ENCODE measurements at regions of chr11 and their contacts with region 1.

Region 1: DNA sequence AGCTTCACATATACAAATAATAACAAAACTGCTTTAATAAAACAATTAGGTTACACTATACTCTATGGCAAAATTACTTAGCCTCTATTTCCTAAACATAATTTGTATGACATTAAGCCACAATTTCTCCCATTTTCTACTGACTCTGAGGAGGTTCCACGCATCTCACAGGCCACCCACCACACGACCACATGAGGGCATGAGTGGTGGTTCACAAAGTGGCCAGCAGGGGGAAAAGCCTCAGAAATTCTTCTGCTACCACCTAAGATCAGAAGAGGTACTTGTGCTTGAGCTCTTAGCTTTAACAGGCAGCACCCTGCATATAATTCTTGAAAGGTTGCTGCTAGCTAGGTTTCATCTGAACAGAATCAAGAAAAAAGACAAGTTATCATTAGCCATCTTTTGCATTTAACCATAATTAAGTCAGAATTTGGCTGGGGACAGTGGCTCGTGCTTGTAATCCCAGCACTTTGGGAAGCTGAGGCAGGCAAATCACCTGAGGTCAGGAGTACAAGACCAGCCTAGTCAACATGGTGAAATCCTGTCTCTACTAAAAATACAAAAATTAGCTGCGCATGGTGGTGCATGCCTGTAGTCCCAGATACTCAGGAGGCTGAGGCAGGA is 7.7 kb downstream of the LPXN start:
- DNase-seq: peak; percentile 76
- H3K4me3 ChIP-seq: no peak overlapping the region
- H3K27ac ChIP-seq: no peak overlapping the region
- H3K4me1 ChIP-seq: peaks cover 3% of the 10 kb centered on the region
- H3K27me3 ChIP-seq: no peaks in the 10 kb centered on the region
- CTCF ChIP-seq: peak; percentile 76 to 86
- POLR2A ChIP-seq: no peak

Region 2: DNA sequence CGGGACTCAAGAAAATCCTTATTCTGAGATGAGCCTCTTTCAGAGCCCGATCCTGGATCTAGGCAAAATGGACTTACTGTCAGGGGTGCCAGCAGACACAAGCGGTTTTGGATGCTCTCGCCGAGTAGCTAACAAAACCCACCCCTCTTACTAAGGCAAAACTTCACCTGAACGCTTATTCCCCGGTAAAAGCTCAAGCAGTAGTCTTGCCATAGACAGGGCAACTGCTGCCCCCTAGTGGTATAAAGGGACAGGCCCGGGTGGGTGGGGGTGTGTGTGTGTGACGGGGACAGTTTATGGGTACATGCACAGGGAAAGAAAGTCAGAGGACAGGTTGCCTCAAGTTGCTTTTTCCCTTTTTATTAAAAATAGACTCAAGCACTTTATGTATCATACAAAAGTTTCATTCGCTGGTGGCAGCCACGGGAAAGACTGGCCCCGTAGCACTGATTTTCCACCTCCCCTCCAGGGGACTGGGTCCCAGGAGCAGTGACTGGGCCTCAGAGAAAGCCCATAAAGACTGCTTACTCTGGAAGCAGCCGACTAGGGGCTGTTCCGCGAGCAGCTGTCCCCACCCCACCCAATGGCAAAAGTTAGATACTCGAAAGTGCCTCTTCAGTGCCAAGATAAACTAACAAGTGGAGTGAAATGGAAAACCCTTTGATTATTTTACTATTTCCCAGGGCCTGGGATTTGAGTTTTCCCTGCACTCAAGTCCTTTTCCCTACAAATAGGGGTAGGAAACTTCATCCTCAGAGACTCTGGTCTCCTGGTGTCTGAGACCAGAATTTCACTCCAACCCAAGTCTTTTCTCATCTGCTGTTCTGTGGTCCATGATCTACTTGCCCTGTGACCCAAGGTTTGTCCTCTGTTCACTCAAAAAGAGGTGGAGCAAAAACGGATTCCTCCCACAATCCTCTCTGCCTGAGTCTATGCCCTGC is 923.0 kb before region 1 on chr11:
- CTCF ChIA-PET with region 1: no interaction called
- POLR2A ChIA-PET with region 1: no interaction called
- dilution Hi-C with region 1: no loop called
- intact Hi-C with region 1: loop called (anchors 1 kb)
- DNase-seq: peak; percentile 68
- H3K4me3 ChIP-seq: no peak overlapping the region
- H3K27ac ChIP-seq: no peak overlapping the region
- H3K4me1 ChIP-seq: peaks cover 14% of the 10 kb centered on the region
- H3K27me3 ChIP-seq: peaks cover 38 to 44% of the 10 kb centered on the region in 2 experiments
- CTCF ChIP-seq: peak; percentile 78 to 86
- POLR2A ChIP-seq: no peak

Region 3: GRCh38 chr11:58549644-58550043 is 18.4 kb before region 1 on chr11:
- CTCF ChIA-PET with region 1: interaction called, 25 read pairs
- POLR2A ChIA-PET with region 1: no interaction called
- dilution Hi-C with region 1: no loop called
- intact Hi-C with region 1: no loop called
- DNase-seq: no peak
- H3K4me3 ChIP-seq: no peak overlapping the region
- H3K27ac ChIP-seq: no peak overlapping the region
- H3K4me1 ChIP-seq: no peaks in the 10 kb centered on the region
- H3K27me3 ChIP-seq: no peaks in the 10 kb centered on the region
- CTCF ChIP-seq: no peak
- POLR2A ChIP-seq: no peak

Region 4: GRCh38 chr11:58597486-58598144 is 29.6 kb after region 1 on chr11:
- CTCF ChIA-PET with region 1: interaction called, 11 read pairs
- POLR2A ChIA-PET with region 1: no interaction called
- dilution Hi-C with region 1: no loop called
- intact Hi-C with region 1: no loop called
- DNase-seq: no peak
- H3K4me3 ChIP-seq: no peak overlapping the region
- H3K27ac ChIP-seq: no peak overlapping the region
- H3K4me1 ChIP-seq: no peaks in the 10 kb centered on the region
- H3K27me3 ChIP-seq: no peaks in the 10 kb centered on the region
- CTCF ChIP-seq: no peak
- POLR2A ChIP-seq: no peak

Region 5: DNA sequence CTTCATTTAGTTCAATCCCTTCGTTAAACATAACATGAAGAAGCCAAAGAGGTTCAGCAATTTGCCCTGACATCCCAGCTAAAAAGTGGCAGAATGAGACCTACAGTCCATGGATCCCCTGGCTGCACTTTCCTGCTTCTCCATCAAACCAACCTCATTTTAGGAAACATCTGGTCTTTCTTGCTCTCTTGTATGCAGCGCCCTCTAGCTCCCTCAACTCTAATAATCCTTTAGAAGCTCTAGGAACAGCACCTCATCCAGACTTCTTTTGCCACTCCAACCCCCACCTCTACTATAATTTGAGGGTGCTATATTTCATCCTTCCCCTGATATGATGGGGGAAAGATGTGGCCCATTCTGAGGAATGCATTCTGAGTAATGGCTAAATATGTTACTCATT is 61.9 kb after region 1 on chr11:
- CTCF ChIA-PET with region 1: interaction called, 90 read pairs
- POLR2A ChIA-PET with region 1: no interaction called
- dilution Hi-C with region 1: no loop called
- intact Hi-C with region 1: no loop called
- DNase-seq: peak; percentile 46
- H3K4me3 ChIP-seq: no peak overlapping the region
- H3K27ac ChIP-seq: no peak overlapping the region
- H3K4me1 ChIP-seq: peaks cover 13% of the 10 kb centered on the region
- H3K27me3 ChIP-seq: no peaks in the 10 kb centered on the region
- CTCF ChIP-seq: peak; percentile 41 to 65
- POLR2A ChIP-seq: no peak

Region 6: DNA sequence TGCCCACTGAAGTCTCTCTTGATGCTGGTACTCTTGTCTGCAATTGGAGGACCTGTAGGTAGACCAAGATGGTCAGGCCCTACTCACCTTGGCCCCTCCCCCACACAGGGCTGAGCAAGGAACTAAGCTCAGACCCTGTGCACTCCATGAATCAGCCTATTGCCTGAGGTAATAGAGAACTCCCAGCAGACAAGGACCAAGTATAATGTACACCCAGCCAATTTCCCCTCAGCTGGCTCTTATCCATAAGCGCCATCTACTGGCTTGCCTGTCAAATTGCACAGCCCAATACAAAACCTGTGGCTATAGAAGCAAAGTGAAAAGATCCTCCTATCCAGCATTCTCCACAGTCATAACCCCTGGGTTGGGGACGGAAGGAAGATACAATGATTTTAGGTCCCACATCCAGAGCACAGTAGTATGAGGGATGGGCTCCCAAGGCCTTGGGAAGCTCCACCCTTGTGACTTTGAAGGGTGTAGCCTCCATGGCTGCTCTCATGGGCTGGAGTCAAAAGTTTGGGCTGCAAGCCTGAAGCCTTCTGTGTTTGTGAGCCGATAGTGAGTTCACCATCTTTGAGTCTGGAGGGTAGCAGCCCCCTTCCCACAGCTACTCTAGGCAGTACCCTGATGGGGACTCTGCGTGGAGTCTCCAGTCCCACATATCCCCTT is 220.5 kb after region 1 on chr11:
- CTCF ChIA-PET with region 1: interaction called, 11 read pairs
- POLR2A ChIA-PET with region 1: no interaction called
- dilution Hi-C with region 1: no loop called
- intact Hi-C with region 1: loop called (anchors 2 kb)
- DNase-seq: peak; percentile 42
- H3K4me3 ChIP-seq: no peak overlapping the region
- H3K27ac ChIP-seq: no peak overlapping the region
- H3K4me1 ChIP-seq: no peaks in the 10 kb centered on the region
- H3K27me3 ChIP-seq: no peaks in the 10 kb centered on the region
- CTCF ChIP-seq: peak; percentile 72 to 80
- POLR2A ChIP-seq: no peak

Region 7: DNA sequence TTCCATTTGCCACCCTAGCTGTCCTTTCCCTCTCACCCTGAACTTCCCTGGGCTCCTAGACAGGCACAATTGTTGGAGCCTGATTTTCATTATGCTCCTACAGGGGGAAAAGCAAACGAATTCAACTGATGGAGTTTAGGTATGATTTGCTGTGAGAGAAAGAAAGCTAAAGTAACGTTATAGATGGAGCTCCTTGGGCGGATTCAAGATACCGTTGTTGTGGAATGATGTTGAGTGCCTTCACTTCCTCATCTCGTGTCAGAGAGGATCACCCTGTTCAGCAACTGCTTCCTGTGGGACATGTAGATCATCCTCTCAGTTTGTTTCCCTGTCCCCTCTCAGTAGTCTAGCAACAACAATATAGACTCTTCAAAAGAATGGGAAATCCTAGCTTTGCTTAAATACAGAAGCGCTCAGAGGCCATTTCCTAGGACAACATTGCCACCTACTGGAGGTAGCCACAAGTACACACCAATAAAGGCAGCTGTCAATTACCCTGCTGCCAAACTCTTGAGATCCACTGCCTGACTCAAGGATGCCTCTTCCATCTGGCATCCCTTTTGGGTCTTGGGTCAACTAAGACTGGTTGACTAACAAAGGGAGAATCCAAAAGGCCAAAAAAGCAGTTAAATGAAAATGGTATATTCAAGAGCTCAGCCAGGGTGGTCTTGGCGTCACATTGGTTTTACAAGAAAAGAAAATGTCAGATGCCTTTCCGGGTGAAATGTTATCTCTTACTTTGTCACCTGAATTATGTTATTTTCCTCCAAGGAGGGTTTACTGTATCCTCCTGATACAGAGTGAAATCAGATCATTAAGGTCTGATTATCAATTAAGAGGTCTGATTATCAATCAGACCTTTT is 590.4 kb after region 1 on chr11:
- CTCF ChIA-PET with region 1: interaction called, 13 read pairs
- POLR2A ChIA-PET with region 1: no interaction called
- dilution Hi-C with region 1: no loop called
- intact Hi-C with region 1: no loop called
- DNase-seq: peak; percentile 76
- H3K4me3 ChIP-seq: no peak overlapping the region
- H3K27ac ChIP-seq: no peak overlapping the region
- H3K4me1 ChIP-seq: peaks cover 2% of the 10 kb centered on the region
- H3K27me3 ChIP-seq: peaks cover 6 to 7% of the 10 kb centered on the region in 2 experiments
- CTCF ChIP-seq: peak; percentile 72 to 82
- POLR2A ChIP-seq: no peak

Region 8: DNA sequence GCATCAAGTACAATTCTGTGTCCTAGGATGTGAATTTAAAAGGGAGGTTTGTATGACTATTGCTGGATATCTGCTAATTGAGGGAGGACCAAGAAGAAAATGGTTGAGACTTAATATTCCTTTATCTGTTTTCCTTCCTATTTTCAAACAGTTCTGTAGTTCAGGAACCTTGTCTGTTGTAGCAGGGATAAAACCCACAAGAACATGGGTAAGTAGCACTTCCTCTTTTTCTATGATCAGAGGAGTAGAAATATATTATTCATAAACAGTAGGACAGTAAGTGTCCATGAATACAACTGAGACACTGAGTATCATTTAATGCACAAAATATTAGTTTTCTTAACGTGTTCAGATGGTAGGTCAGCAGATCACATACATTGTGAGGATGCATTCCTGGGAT is 1496.1 kb after region 1 on chr11:
- CTCF ChIA-PET with region 1: no interaction called
- POLR2A ChIA-PET with region 1: no interaction called
- dilution Hi-C with region 1: no loop called
- intact Hi-C with region 1: no loop called
- DNase-seq: no peak
- H3K4me3 ChIP-seq: no peak overlapping the region
- H3K27ac ChIP-seq: no peak overlapping the region
- H3K4me1 ChIP-seq: no peaks in the 10 kb centered on the region
- H3K27me3 ChIP-seq: peaks cover 2% of the 10 kb centered on the region in 2 experiments
- CTCF ChIP-seq: no peak
- POLR2A ChIP-seq: no peak